ENCODE measurements at regions of chr1 and their contacts with region 1.

Region 1: DNA sequence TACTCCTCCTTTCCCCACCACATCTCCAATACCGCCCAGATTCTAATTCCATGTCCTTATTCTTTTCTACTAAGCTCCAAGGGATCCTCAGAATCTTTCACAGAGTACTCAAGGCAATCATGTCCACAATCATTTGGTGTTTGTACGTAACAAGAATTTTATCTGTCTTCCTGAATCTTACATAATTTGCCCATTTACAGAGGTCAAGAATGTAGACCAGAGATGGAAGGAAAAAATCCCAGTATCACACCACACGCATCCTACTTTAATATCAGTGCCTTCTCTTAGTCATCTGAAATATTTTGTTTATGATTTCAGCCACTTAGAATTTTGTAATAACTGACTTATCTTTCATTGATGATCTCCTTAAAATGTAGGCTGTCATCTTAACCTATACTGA is 366.0 kb upstream of the LRRC7 start:
- DNase-seq: no peak
- H3K4me3 ChIP-seq: no peak overlapping the region
- H3K27ac ChIP-seq: no peak overlapping the region
- H3K4me1 ChIP-seq: no peaks in the 10 kb centered on the region
- H3K27me3 ChIP-seq: no peaks in the 10 kb centered on the region
- CTCF ChIP-seq: no peak
- EP300 ChIP-seq: no peak
- POLR2A ChIP-seq: no peak

Region 2: GRCh38 chr1:69213644-69214043 is 11.9 kb after region 1 on chr1:
- intact Hi-C with region 1: loop called in 1 of 4 experiments (anchors 1 kb)
- DNase-seq: no peak
- H3K4me3 ChIP-seq: no peak overlapping the region
- H3K27ac ChIP-seq: no peak overlapping the region
- H3K4me1 ChIP-seq: no peaks in the 10 kb centered on the region
- H3K27me3 ChIP-seq: no peaks in the 10 kb centered on the region
- CTCF ChIP-seq: no peak
- EP300 ChIP-seq: no peak
- POLR2A ChIP-seq: no peak

Measured in ovary (tissue), 10 donors.